HepG2 (cell line): ENCODE measurements at regions of chr6 and their contacts with region 1.

Region 1: GRCh38 chr6:157756708-157757429 is 66.2 kb upstream of the SNX9 start:
- DNase-seq: peak; percentile 81
- ATAC-seq: peak; percentile 95
- H3K4me3 ChIP-seq: peak overlapping the region in 2 of 3 experiments; percentile 4 to 34; a peak in 3 of 6 replicates
- H3K27ac ChIP-seq: no peak overlapping the region
- H3K4me1 ChIP-seq: peaks cover 57% of the 10 kb centered on the region
- H3K27me3 ChIP-seq: peaks cover 0 to 2% of the 10 kb centered on the region in 2 experiments; a peak in 1 of 5 replicates
- CTCF ChIP-seq: peak; percentile 95
- EP300 ChIP-seq: no peak; a peak in 1 of 4 replicates
- POLR2A ChIP-seq: no peak
- RAD21 ChIP-seq: peak; percentile 96

Region 2: DNA sequence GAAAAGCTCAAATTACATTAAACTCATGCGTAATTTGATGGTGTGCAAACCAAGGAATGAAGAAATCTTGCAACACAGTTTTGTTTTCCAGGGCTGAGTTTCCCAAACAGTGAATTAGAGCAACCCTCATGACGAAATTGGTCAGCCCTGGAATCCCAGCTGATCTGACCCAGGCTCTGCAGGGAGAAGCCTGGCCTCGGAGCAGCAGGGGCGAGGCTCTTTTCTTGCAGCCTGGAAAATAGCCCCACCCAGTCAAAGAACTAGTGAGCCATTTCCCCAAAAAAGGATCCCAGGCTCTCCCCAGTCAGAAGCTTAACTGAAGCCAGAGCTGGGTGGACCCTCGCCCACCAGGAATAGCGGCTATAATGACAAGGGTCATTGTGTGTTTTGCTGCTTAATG is 41.1 kb before region 1 on chr6:
- CTCF ChIA-PET with region 1: interaction called, 6 read pairs
- POLR2A ChIA-PET with region 1: no interaction called
- in situ Hi-C with region 1: no loop called
- intact Hi-C with region 1: loop called (anchors 5 kb)
- DNase-seq: no peak
- ATAC-seq: peak; percentile 31; the same call in 2 of the 3 replicates
- H3K4me3 ChIP-seq: no peak overlapping the region
- H3K27ac ChIP-seq: no peak overlapping the region
- H3K4me1 ChIP-seq: peaks cover 27% of the 10 kb centered on the region
- H3K27me3 ChIP-seq: peaks cover 6 to 28% of the 10 kb centered on the region in 2 experiments; a peak in 3 of 5 replicates
- CTCF ChIP-seq: no peak
- EP300 ChIP-seq: no peak
- POLR2A ChIP-seq: no peak
- RAD21 ChIP-seq: no peak

Region 3: GRCh38 chr6:157741948-157742556 is 14.8 kb before region 1 on chr6:
- CTCF ChIA-PET with region 1: no interaction called
- POLR2A ChIA-PET with region 1: no interaction called
- in situ Hi-C with region 1: no loop called
- intact Hi-C with region 1: no loop called
- DNase-seq: no peak
- ATAC-seq: peak; percentile 41; the same call in 1 of the 3 replicates
- H3K4me3 ChIP-seq: no peak overlapping the region
- H3K27ac ChIP-seq: no peak overlapping the region
- H3K4me1 ChIP-seq: no peaks in the 10 kb centered on the region
- H3K27me3 ChIP-seq: peaks cover 0 to 10% of the 10 kb centered on the region in 2 experiments; a peak in 2 of 5 replicates
- CTCF ChIP-seq: no peak
- EP300 ChIP-seq: no peak
- POLR2A ChIP-seq: no peak
- RAD21 ChIP-seq: no peak

Region 4: DNA sequence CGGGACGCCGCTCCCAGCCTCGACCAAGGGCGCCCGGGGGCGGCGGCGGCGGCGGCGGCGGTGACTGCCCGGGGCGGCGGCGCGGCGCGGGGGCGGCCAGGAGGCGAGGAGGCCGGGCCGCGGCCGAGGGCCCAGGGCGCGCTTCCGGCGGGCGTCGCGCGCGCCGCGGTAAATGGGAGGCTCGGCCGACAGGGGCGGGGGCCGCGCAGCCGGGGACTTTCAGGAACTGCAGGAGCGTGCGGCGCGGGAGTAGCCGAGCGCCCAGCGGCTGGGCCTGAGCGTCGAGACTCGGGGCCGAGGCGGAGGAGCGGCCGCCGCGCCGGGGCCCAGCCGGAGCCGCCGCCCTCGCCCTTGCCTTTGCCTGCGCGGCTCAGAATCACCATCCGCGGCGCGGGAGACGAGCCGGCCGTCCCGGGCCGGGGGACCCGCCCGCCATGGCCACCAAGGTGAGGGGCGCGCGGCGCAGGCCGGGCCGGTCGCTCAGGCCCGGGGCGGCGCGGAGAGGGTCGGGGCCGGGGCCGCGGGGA is 66.2 kb after region 1 on chr6 and contains the start of gene SNX9:
- CTCF ChIA-PET with region 1: interaction called, 3 read pairs
- POLR2A ChIA-PET with region 1: no interaction called
- in situ Hi-C with region 1: no loop called
- intact Hi-C with region 1: loop called (anchors 5 kb)
- DNase-seq: peak; percentile 54
- ATAC-seq: peak; percentile 86
- H3K4me3 ChIP-seq: peak within 1 kb of the TSS; percentile 95 to 99 (median 98)
- H3K27ac ChIP-seq: peak within 1 kb of the TSS; percentile 79
- H3K4me1 ChIP-seq: peaks cover 39% of the 10 kb centered on the region
- H3K27me3 ChIP-seq: peaks cover 4 to 20% of the 10 kb centered on the region in 2 experiments; a peak in 4 of 5 replicates
- CTCF ChIP-seq: no peak
- EP300 ChIP-seq: no peak
- POLR2A ChIP-seq: peak; percentile 46 to 70; a peak in 3 of 4 replicates
- RAD21 ChIP-seq: peak; percentile 49
- total RNA-seq, gene SNX9: 21.9 and 27.7 TPM in 2 replicates

Region 5: DNA sequence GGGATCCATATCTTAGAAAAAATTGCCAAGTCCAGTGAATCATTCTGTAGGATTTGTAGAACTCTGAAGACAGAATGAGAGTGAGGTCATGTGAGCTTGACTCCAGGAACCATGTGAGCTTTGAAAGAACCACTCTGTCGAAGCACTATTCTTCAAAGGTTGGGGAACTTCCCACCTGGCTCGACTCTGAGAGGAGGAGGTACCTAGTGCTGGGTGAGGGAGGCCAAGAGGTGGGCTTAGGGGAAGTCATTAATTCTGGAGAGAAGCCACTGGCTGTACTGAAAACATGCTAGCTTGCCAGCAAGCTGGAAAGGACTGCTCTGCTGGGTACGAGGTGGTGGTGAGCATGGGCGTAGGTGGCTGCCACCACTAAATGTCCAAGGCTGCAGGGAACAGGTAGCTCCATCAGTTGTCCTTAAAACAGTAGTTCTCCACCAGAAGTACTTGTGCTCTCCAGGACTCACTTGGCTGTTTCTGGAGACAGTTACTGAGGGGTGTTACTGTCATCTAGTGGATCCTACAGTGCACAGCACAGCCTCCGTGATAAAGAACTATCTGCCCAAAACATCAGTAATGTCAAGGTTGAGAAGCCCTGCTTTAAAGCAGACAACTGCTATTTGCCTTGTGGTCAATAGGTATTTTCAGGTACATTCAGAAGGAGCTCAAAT is 190.1 kb after region 1 on chr6:
- CTCF ChIA-PET with region 1: no interaction called
- POLR2A ChIA-PET with region 1: no interaction called
- in situ Hi-C with region 1: loop called (anchors 5 kb)
- intact Hi-C with region 1: loop called (anchors 5 kb)
- DNase-seq: peak; percentile 41
- ATAC-seq: peak; percentile 83
- H3K4me3 ChIP-seq: no peak overlapping the region
- H3K27ac ChIP-seq: no peak overlapping the region
- H3K4me1 ChIP-seq: peaks cover 6% of the 10 kb centered on the region
- H3K27me3 ChIP-seq: no peaks in the 10 kb centered on the region; a peak in 1 of 5 replicates
- CTCF ChIP-seq: peak; percentile 74
- EP300 ChIP-seq: no peak
- POLR2A ChIP-seq: peak in 1 of 2 experiments; percentile 6; a peak in 1 of 4 replicates
- RAD21 ChIP-seq: peak; percentile 80

Region 6: DNA sequence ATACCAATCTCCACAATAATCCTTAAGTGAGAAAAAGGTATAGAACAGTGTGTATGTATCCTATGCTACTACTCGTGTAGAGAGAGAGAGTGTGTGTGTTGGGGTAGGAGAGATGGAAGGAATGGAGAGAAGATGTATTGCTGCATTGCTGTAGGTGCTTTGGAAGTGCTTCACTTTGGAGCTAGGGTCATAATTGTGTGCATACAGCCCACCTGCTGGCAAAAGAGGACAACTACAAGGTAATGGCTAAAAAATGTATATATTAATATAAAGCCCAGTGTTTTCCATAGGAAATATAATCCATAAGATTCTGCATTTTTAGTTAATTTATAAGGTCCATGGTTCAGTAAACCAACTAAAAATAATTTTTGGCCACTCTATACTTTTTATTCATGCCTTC is 375.1 kb after region 1 on chr6:
- CTCF ChIA-PET with region 1: no interaction called
- POLR2A ChIA-PET with region 1: interaction called, 4 read pairs
- in situ Hi-C with region 1: no loop called
- intact Hi-C with region 1: loop called (anchors 2 kb)
- DNase-seq: peak; percentile 58
- ATAC-seq: peak; percentile 96
- H3K4me3 ChIP-seq: no peak overlapping the region
- H3K27ac ChIP-seq: no peak overlapping the region
- H3K4me1 ChIP-seq: no peaks in the 10 kb centered on the region
- H3K27me3 ChIP-seq: no peaks in the 10 kb centered on the region
- CTCF ChIP-seq: peak; percentile 78
- EP300 ChIP-seq: no peak
- POLR2A ChIP-seq: no peak
- RAD21 ChIP-seq: peak; percentile 43; the same call in 1 of the 2 replicates

Region 7: GRCh38 chr6:158284007-158284875 is 527.4 kb after region 1 on chr6:
- CTCF ChIA-PET with region 1: no interaction called
- POLR2A ChIA-PET with region 1: no interaction called
- in situ Hi-C with region 1: no loop called
- intact Hi-C with region 1: no loop called
- DNase-seq: no peak
- ATAC-seq: no peak
- H3K4me3 ChIP-seq: no peak overlapping the region
- H3K27ac ChIP-seq: no peak overlapping the region
- H3K4me1 ChIP-seq: no peaks in the 10 kb centered on the region
- H3K27me3 ChIP-seq: no peaks in the 10 kb centered on the region
- CTCF ChIP-seq: no peak
- EP300 ChIP-seq: no peak
- POLR2A ChIP-seq: no peak
- RAD21 ChIP-seq: no peak